ENCODE measurements at regions of chr1 and their contacts with region 1.

Region 1: DNA sequence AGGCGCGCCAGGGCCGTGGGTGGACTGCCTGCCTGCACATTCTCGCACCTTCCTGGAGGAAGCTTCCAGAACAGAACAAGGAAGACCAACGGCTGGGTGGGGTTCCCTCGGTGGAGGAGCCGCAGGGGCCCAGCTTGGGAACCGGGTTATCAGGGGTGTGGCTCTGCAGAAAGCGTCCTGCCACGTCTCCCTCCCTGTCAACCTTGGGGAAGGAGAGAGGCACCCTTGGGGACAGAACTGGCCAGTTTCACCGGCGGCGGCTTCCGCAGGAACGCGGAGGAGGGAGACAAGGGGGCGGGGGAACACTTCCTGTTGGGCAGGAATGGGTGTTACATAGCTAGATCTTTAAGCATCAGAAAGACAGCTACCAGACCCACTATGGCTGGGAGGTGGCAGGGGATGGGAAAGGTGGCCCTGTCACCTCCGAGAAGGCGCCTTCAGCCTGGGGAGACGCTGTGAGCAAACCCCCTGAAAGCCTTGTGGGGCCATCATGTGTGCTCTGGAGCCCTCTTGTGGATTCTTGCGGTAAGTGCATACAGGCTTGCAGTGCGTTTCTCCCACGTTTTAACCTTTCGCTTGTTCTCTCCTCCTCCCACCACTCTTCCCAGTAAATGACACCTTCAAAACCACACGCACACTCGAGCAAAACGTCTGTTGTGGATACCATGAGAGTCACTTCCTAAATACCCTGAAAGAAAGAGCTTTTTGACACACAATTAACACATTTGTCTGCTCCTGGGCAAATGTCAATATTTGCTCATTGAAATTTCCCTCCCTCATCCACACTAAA is 3.8 kb upstream of the PLEKHA6 start:
- DNase-seq: peak; percentile 82
- H3K4me3 Mint-ChIP-seq: peak overlapping the region; percentile 60
- H3K27ac Mint-ChIP-seq: no peak overlapping the region
- H3K4me1 Mint-ChIP-seq: peaks cover 10% of the 10 kb centered on the region
- H3K27me3 Mint-ChIP-seq: peaks cover 57% of the 10 kb centered on the region

Region 2: GRCh38 chr1:204162231-204163074 is 201.1 kb before region 1 on chr1:
- CTCF ChIA-PET with region 1: interaction called, 88 read pairs
- DNase-seq: peak; percentile 84
- H3K4me3 Mint-ChIP-seq: no peak overlapping the region
- H3K27ac Mint-ChIP-seq: no peak overlapping the region
- H3K4me1 Mint-ChIP-seq: no peaks in the 10 kb centered on the region
- H3K27me3 Mint-ChIP-seq: peaks cover 27% of the 10 kb centered on the region

Region 3: DNA sequence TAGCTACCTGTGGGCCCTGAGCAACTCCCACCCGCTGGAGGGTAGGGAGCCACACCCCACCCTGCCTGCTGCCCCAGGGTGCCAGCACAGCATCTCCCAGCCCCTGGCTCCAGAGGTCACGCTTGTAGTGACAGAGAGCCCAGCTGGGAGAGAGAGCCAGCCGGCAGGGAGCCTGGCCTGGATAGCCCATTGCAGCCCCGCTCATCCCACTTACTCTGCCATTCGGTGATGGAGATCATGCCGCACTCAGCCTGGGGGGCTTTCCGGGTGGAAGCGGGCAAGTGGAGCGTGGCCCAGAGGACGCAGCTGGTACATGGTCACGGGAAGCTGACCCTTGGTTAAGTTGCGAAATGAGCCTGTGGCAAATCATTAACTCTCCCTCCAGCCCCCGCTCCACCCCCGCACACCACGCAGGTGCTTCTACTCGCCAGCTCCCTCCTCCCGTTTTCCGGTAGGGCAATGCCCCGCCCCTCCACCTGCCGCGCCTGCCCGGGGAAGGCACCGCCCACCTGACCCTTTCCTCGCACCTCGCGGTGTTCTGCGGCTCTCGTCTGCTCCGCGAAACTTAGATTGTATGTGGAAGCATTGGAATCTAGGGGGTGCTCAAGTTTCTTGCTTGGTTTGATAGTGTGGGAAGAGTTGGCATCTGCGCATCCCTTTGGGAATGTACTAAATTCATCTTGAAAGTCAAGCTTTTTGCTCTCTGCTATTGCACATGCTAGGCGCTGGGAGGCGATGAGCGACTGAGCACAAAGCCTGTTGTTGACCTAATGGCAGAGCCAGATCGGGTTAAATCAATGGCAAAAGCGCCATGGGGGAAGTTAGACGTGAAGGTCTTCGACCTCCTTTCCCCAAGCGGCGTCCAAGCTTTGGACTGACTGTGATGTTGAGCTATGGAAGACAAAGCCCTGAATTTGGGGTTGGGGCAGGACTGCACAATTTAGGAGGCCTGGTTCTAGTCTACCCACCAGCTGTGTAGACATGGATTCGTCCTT is 149.6 kb before region 1 on chr1 and contains the start of gene GOLT1A:
- CTCF ChIA-PET with region 1: interaction called, 21 read pairs
- DNase-seq: peak; percentile 63
- H3K4me3 Mint-ChIP-seq: no peak within 1 kb of the TSS
- H3K27ac Mint-ChIP-seq: no peak within 1 kb of the TSS
- H3K4me1 Mint-ChIP-seq: peaks cover 6% of the 10 kb centered on the region
- H3K27me3 Mint-ChIP-seq: peaks cover 25% of the 10 kb centered on the region

Region 4: GRCh38 chr1:204257954-204258752 is 105.4 kb before region 1 on chr1:
- CTCF ChIA-PET with region 1: interaction called, 79 read pairs
- DNase-seq: peak; percentile 46
- H3K4me3 Mint-ChIP-seq: no peak overlapping the region
- H3K27ac Mint-ChIP-seq: no peak overlapping the region
- H3K4me1 Mint-ChIP-seq: no peaks in the 10 kb centered on the region
- H3K27me3 Mint-ChIP-seq: peaks cover 17% of the 10 kb centered on the region

Region 5: DNA sequence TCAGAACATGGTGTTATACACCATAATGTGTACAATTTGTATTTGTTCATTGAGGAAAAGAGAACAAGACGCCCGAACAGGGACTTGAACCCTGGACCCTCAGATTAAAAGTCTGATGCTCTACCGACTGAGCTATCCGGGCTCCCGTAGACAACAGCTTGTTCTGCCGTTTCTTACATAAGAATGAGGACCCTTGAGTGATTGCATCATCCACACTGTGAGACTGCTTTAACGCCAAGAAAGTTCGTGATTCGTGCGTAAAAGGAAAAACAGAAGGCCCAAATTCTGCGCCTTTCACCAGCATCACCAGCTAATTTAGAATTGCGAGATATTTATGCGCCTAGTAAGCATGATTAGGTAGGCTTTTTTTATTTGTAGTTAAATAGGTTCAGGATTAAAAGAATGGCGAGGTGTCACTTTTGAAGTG is 143.4 kb after region 1 on chr1:
- CTCF ChIA-PET with region 1: interaction called, 10 read pairs
- DNase-seq: peak; percentile 88
- H3K4me3 Mint-ChIP-seq: peak overlapping the region; percentile 87
- H3K27ac Mint-ChIP-seq: peak overlapping the region; percentile 100
- H3K4me1 Mint-ChIP-seq: peaks cover 57% of the 10 kb centered on the region
- H3K27me3 Mint-ChIP-seq: peaks cover 5% of the 10 kb centered on the region

Measured in activated naive CD4-positive, alpha-beta T cell treated with anti-CD3 and anti-CD28 coated beads, Interleukin-2, amount 10 ng/mL, durations not matched to agents 7 days and 5 days (primary cell).